Activated CD4-positive, alpha-beta T cell treated with anti-CD3 and anti-CD28 coated beads for 36 hours (primary cell): ENCODE measurements at regions of chr10 and their contacts with region 1.

Region 1: DNA sequence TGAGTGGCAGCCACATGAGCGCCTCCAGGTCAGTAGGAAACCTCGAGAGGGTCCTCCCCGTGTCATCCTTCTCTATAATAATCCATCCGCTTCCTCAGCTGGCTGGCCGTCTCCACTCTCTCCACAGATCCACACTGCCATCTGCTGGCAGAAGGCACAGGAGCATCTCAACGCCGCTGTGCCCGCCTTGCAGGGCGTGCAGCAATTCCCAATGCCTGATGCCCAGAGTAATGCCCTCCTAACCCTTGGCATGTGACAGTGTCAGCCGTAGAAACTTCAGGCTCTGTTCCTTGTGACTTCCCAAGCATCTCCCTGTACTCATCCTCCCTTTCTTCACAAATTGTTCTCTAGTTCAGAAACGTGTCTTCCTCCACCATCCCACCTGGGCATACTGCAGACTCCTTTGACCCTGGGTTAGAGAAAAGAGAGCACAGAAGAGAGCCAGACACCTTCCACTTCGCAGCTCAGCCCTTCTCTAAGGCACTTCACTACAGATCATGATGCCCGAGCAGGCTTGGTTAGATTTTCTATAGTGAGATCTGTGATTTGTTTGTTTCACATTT is 70.8 kb downstream of the XPNPEP1 start:
- DNase-seq: peak; percentile 88
- ATAC-seq: peak; percentile 89
- H3K4me3 Mint-ChIP-seq: no peak overlapping the region
- H3K27ac Mint-ChIP-seq: no peak overlapping the region
- H3K4me1 Mint-ChIP-seq: peaks cover 15% of the 10 kb centered on the region
- H3K27me3 Mint-ChIP-seq: peaks cover 2% of the 10 kb centered on the region

Region 2: GRCh38 chr10:109838592-109839244 is 13.8 kb before region 1 on chr10:
- CTCF ChIA-PET with region 1: interaction called, 18 read pairs
- POLR2A ChIA-PET with region 1: no interaction called
- intact Hi-C with region 1: no loop called
- DNase-seq: no peak
- ATAC-seq: no peak
- H3K4me3 Mint-ChIP-seq: no peak overlapping the region
- H3K27ac Mint-ChIP-seq: no peak overlapping the region
- H3K4me1 Mint-ChIP-seq: no peaks in the 10 kb centered on the region
- H3K27me3 Mint-ChIP-seq: peaks cover 15% of the 10 kb centered on the region